A549 (cell line): ENCODE measurements at regions of chr5 and their contacts with region 1.

Region 1: GRCh38 chr5:1167728-1168709 is 33.4 kb upstream of the SLC6A19 start:
- DNase-seq: peak; percentile 75 to 85
- ATAC-seq: peak; percentile 81 to 92
- H3K4me3 ChIP-seq: peak overlapping the region; percentile 44
- H3K27ac ChIP-seq: peak overlapping the region; percentile 29 to 67; a peak in 4 of 6 replicates
- H3K4me1 ChIP-seq: no peaks in the 10 kb centered on the region
- CTCF ChIP-seq: peak; percentile 66
- EP300 ChIP-seq: no peak
- POLR2A ChIP-seq: no peak
- RAD21 ChIP-seq: peak; percentile 88 to 97

Region 2: DNA sequence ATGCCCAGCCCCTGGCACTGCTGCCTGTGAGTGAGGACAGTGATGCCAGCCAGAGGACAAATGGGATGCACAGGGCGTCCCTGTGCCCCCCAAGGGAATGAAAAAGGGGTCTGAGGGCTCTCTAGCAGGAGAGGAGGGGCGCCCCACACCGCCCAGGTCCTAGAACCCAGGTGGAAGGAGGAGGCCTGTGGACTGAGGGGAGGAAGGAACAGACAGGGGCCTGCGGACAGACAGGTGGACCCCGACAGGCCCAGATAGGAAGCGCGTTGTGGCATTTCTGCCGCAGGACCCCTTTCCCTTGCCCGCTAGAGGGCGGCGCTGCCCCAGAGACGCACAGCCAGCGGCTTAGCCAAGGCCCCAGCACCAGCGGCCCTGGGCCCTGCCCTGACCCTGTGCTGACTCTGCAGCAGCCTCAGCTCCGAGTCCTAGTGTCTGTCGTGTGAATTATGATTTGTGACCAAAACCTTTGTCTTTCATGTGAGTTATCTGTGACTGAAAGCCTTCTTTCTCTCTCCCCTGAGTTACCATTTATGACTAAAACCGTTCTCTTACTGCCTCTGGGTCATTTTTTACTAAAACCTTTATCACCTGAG is 244.6 kb before region 1 on chr5:
- CTCF ChIA-PET with region 1: interaction called, 70 read pairs
- POLR2A ChIA-PET with region 1: no interaction called
- DNase-seq: peak; percentile 80 to 89
- ATAC-seq: peak; percentile 96 to 99
- H3K4me3 ChIP-seq: no peak overlapping the region
- H3K27ac ChIP-seq: peak overlapping the region in 1 of 2 experiments; percentile 65; a peak in 3 of 6 replicates
- H3K4me1 ChIP-seq: peaks cover 13% of the 10 kb centered on the region
- CTCF ChIP-seq: peak; percentile 93
- EP300 ChIP-seq: no peak
- POLR2A ChIP-seq: no peak
- RAD21 ChIP-seq: peak; percentile 95 to 98

Region 3: DNA sequence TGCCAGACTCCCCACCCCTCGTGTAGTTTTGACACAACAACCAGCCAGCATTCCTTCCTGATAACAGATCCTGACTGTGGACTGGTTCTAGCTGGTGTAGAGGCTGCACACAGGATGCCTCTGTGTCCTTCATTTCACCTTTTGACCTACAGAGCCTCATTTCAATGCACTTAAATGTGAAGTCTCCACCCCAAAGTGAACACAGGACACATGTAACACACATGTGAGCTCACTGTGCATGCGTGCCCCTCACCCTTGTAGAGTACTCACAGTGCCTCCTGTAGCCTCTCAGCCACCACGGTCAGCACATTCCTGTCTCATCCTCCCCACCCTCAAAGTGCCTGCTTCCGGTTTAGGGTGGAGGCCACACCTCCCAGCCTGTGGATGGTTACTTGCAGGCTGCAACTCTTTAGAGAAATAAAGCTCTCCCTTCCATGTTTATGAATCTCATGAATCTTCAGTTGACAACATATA is 171.0 kb before region 1 on chr5:
- CTCF ChIA-PET with region 1: interaction called, 13 read pairs
- POLR2A ChIA-PET with region 1: no interaction called
- DNase-seq: peak; percentile 36 to 46
- ATAC-seq: peak in 1 of 2 experiments; percentile 77; a peak in 3 of 6 replicates
- H3K4me3 ChIP-seq: no peak overlapping the region
- H3K27ac ChIP-seq: peak overlapping the region in 1 of 2 experiments; percentile 67; a peak in 3 of 6 replicates
- H3K4me1 ChIP-seq: no peaks in the 10 kb centered on the region
- CTCF ChIP-seq: no peak
- EP300 ChIP-seq: no peak
- POLR2A ChIP-seq: no peak
- RAD21 ChIP-seq: no peak

Region 4: DNA sequence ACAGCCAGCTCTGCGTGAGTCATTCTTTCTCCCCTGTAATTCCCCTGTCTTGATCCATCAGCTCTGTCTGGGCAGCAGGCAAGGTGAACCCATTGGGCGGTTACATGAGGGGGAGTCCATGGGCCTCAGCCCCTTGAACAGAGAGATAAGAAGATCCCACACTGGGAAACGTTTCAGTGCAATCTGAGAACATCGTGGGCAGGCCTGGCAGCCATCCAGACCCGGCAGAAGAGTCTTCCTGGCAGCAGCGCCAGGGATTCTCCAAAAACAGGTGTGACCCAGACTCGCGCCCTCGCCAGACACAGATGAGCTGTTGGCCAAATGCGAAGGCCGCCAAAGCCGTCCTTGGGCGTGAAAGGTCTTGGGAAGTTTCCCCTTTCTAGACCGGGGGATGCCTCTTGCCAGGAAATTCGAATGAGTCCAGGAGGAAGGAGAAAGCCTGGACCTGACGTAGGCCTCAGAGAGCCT is 49.8 kb before region 1 on chr5:
- CTCF ChIA-PET with region 1: interaction called, 12 read pairs
- POLR2A ChIA-PET with region 1: no interaction called
- DNase-seq: no peak
- ATAC-seq: peak in 1 of 2 experiments; percentile 56; a peak in 3 of 6 replicates
- H3K4me3 ChIP-seq: no peak overlapping the region
- H3K27ac ChIP-seq: 0 out of 6 replicates have a peak overlapping the region, but pooled peaks of 1 of the 2 experiments have one; percentile 2
- H3K4me1 ChIP-seq: peaks cover 9% of the 10 kb centered on the region; the same call in 2 of the 3 replicates
- CTCF ChIP-seq: no peak
- EP300 ChIP-seq: no peak
- POLR2A ChIP-seq: no peak
- RAD21 ChIP-seq: no peak

Region 5: GRCh38 chr5:1182633-1183423 is 14.8 kb after region 1 on chr5:
- CTCF ChIA-PET with region 1: interaction called, 91 read pairs
- POLR2A ChIA-PET with region 1: no interaction called
- DNase-seq: no peak
- ATAC-seq: no peak; a peak in 1 of 6 replicates
- H3K4me3 ChIP-seq: no peak overlapping the region
- H3K27ac ChIP-seq: no peak overlapping the region
- H3K4me1 ChIP-seq: no peaks in the 10 kb centered on the region
- CTCF ChIP-seq: no peak
- EP300 ChIP-seq: no peak
- POLR2A ChIP-seq: no peak
- RAD21 ChIP-seq: no peak

Region 6: GRCh38 chr5:1652596-1653345 is 484.8 kb after region 1 on chr5:
- CTCF ChIA-PET with region 1: interaction called, 18 read pairs
- POLR2A ChIA-PET with region 1: no interaction called
- DNase-seq: no peak
- ATAC-seq: peak in 1 of 2 experiments; percentile 3; a peak in 2 of 6 replicates
- H3K4me3 ChIP-seq: peak overlapping the region; percentile 37; the same call in 1 of the 3 replicates
- H3K27ac ChIP-seq: no peak overlapping the region
- H3K4me1 ChIP-seq: peaks cover 10% of the 10 kb centered on the region; the same call in 2 of the 3 replicates
- CTCF ChIP-seq: no peak
- EP300 ChIP-seq: no peak
- POLR2A ChIP-seq: no peak
- RAD21 ChIP-seq: no peak